Ascending aorta (tissue), 2 donors: ENCODE measurements at regions of chr19 and their contacts with region 1.

Region 1: DNA sequence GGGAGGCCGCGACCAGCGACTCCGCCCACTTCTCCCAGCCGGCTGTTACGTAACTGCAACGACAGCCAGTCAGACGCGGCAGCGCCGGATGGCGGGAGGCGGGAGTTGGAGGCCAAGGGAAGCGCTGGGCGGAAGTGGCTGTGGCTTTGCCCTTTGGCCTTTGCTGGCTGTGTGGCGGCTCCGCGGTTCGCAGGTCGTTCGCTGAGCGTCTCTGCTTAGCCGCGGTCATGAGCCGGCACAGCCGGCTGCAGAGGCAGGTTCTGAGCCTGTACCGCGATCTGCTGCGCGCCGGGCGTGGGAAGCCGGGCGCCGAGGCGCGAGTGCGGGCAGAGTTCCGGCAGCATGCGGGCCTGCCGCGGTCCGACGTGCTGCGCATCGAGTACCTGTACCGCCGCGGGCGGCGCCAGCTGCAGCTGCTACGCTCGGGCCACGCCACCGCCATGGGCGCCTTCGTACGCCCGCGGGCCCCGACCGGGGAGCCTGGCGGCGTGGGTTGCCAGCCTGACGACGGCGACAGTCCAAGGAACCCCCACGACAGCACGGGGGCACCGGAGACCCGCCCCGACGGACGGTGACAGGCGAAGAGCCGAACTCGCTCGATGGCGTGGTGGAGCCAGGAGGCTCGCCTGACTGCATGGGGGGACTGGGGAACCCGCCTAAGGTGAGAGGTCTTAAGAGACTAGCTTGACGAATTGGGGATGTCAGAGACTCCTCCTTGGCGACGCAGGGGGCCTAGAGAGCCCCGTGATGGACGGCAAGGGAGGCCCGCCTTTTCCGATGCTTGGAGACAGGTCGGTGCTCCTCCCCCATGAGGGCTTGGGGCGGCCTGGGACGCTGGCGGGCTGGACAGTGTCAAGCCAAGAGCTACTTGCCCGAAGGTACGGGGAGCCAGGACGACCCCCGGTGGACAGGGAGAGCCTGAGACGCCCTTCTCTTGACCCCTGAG is at the start of gene SDHAF1:
- DNase-seq: peak; percentile 85 to 98
- H3K4me3 ChIP-seq: peak within 1 kb of the TSS; percentile 82 to 87
- H3K27ac ChIP-seq: peak within 1 kb of the TSS; percentile 73 to 74
- H3K4me1 ChIP-seq: peaks cover 3 to 14% of the 10 kb centered on the region in 2 donors
- H3K27me3 ChIP-seq: no peaks in the 10 kb centered on the region
- CTCF ChIP-seq: no peak
- total RNA-seq, gene SDHAF1: 107 TPM

Region 2: DNA sequence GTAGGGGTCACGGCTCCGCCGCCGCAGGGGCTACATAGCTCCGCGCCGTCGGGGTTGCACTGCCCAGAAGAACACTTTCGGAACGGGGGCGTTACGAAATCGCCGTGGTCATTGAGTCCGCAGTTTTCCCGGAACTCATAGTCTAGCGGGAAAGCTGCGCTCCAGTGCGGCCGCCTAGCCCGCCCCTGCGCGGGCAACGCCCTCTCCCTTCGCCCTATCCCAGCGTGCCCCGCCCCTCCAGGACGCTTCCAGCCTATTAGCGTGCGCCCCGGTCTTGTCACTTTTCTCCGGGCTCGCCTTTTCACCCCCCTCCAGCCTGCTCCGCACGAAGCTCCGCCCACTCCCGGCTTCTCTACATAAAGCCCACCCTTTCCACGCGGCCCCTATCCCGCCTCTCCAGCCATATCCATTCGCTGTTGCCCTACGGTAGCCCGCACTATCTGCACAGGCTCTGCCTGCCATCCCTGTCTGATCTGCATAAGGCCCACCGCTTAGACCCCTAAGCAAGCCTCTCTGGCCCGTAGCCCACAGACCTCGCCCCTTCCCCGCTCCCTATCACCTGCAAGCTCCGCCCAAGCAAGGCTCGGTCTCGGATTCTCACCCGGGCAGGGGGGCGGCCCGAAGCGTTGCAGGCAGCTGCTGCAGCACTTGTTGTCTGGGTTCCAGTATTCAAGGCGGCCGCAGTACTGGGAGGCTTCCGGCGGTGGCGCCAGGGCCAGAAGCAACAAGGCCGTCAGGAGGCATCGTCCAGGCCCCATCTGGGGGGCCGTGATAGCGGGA is 254.7 kb before region 1 on chr19:
- intact Hi-C with region 1: loop called (anchors 2 kb)
- DNase-seq: peak; percentile 94 to 99
- H3K4me3 ChIP-seq: peak overlapping the region; percentile 56 to 70
- H3K27ac ChIP-seq: peak overlapping the region; percentile 81 to 85
- H3K4me1 ChIP-seq: peaks cover 10 to 18% of the 10 kb centered on the region in 2 donors
- H3K27me3 ChIP-seq: no peaks in the 10 kb centered on the region
- CTCF ChIP-seq: peak; percentile 12 to 22 (median 18)

Region 3: GRCh38 chr19:36014029-36014924 is 19.0 kb after region 1 on chr19 and contains the start of gene ALKBH6:
- intact Hi-C with region 1: loop called (anchors 1 kb)
- DNase-seq: peak; percentile 99 to 100
- H3K4me3 ChIP-seq: peak within 1 kb of the TSS; percentile 58 to 76
- H3K27ac ChIP-seq: peak within 1 kb of the TSS; percentile 74 to 85
- H3K4me1 ChIP-seq: peaks cover 4 to 14% of the 10 kb centered on the region in 2 donors
- H3K27me3 ChIP-seq: no peaks in the 10 kb centered on the region
- CTCF ChIP-seq: no peak
- total RNA-seq, gene ALKBH6: 35.3 TPM

Region 4: DNA sequence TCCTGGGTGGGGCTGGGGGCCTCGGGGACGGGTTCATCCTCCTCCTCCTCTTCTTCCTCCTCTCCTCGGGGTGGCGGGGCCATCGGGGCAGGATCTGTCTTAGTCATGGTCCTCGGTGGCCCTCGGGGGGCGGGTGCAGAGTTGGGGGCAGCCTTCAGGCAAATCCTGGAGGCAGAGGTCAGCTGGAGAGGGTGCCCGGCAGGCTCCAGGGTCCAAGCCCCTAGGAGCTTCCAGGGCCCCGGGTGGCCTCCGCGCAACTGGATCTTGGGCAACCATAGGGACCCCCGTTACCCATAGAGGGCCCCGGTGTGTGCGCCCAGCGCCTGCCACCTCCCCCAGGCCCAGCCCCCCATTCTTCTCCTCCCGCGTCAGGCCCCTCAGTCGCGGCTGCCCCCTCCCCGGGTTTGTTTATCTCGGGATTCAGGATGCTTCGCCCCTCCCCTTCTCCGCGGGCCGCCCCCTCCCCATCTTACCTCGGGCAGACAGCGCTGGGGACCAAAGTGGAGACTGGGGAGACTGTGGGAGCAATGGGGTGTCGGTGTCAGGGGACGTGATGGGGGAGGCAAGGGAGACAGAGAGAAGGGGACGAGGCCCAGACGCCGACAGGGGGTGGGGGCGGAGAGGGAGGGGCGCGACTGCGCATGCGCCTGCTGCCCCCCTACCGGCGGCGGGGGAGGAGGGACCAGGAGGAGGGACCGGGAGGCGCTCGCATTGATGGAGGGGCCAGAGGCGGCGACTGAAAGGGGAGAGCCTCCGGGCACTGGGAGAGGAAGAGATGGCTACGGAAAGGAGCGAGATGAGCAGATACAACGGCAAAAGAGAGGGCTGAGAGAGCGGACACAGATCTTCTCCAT is 37.2 kb after region 1 on chr19 and contains the start of gene CLIP3:
- intact Hi-C with region 1: loop called (anchors 5 kb)
- DNase-seq: peak; percentile 12 to 81
- H3K4me3 ChIP-seq: peak within 1 kb of the TSS; percentile 67 to 95
- H3K27ac ChIP-seq: peak within 1 kb of the TSS; percentile 75 to 85
- H3K4me1 ChIP-seq: peaks cover 0 to 4% of the 10 kb centered on the region in 2 donors
- H3K27me3 ChIP-seq: no peaks in the 10 kb centered on the region
- CTCF ChIP-seq: no peak
- total RNA-seq, gene CLIP3: 43.2 TPM